Endothelial cell of umbilical vein (primary cell): ENCODE measurements at regions of chr4 and their contacts with region 1.

Region 1: GRCh38 chr4:121192480-121192879 is 28.4 kb upstream of the TNIP3 start:
- DNase-seq: peak; percentile 31
- H3K4me3 ChIP-seq: no peak overlapping the region
- H3K27ac ChIP-seq: no peak overlapping the region
- H3K4me1 ChIP-seq: no peaks in the 10 kb centered on the region
- H3K27me3 ChIP-seq: peaks cover 7 to 23% of the 10 kb centered on the region in 2 experiments
- CTCF ChIP-seq: peak; percentile 50 to 56
- POLR2A ChIP-seq: no peak

Region 2: DNA sequence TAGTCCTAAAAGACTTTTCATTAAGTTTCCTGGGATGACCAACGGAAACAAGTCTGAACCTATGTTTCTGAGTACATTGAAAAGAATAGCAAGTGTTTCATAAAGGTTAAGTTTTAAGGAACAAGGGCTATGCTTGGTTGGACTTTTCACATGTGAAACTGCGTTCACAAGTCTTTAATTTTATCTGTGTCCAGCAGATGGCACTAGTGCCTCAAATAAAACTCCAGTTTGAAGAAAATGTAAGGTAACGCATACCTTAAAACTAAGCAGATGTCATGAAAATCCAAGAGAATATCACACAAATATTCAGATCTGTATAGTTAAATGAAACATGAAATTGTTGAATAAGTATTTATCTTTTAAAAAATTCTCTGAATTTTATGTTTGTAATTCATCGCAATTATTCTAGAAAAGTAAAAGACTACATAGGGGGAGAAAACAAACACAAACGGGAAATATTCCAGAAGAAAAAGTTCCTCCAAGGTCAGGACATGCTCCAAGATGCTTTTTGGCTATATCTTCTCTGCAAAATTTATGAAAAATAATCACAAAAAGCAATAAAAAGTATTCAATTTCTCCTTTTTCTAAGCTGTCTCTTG is 1036.3 kb before region 1 on chr4:
- CTCF ChIA-PET with region 1: interaction called, 11 read pairs
- POLR2A ChIA-PET with region 1: no interaction called
- dilution Hi-C with region 1: no loop called
- intact Hi-C with region 1: no loop called
- DNase-seq: peak; percentile 79
- H3K4me3 ChIP-seq: no peak overlapping the region
- H3K27ac ChIP-seq: no peak overlapping the region
- H3K4me1 ChIP-seq: no peaks in the 10 kb centered on the region
- H3K27me3 ChIP-seq: no peaks in the 10 kb centered on the region
- CTCF ChIP-seq: peak; percentile 34
- POLR2A ChIP-seq: no peak

Region 3: GRCh38 chr4:120915336-120915735 is 277.1 kb before region 1 on chr4:
- CTCF ChIA-PET with region 1: no interaction called
- POLR2A ChIA-PET with region 1: no interaction called
- dilution Hi-C with region 1: no loop called
- intact Hi-C with region 1: no loop called
- DNase-seq: no peak
- H3K4me3 ChIP-seq: no peak overlapping the region
- H3K27ac ChIP-seq: no peak overlapping the region
- H3K4me1 ChIP-seq: no peaks in the 10 kb centered on the region
- H3K27me3 ChIP-seq: no peaks in the 10 kb centered on the region
- CTCF ChIP-seq: no peak
- POLR2A ChIP-seq: no peak

Region 4: DNA sequence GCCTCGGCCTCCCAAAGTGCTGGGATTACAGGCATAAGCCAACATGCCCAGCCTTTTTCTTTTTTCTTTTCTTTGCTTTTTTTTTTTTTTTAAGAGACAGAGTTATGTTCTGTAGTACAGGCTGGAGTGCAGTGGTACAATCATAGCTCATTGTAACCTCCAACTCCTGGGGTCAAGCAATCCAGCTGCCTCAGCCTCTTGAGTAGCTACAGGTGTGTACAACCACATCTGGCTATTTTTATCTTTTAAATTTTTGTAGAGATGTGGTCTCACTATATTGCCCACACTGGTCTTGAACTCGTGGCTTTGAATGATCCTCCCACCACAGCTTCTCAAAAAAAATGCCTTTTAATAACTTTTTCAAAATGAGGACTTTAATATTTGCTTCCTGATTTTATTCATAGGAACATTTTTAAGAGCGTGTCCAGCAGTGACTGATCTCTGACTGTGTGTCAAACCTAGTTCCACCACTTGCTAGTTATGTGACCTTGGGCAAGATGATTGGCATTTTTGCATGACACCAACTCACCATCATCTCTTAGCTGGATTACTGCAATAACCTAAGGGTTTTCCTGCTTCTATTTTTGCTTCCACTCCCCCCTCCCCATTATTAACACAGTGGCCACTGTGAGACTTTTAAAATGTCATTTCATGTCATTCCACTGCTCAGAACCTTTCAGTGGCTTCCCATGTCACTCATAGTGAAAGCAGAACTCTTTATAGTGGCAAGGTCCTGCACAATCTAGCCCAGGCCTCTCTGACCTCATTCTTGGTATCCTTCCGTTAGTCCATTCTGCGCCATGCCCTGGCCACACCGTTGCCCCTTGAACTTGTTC is 23.8 kb before region 1 on chr4:
- CTCF ChIA-PET with region 1: interaction called, 30 read pairs
- POLR2A ChIA-PET with region 1: no interaction called
- dilution Hi-C with region 1: no loop called
- intact Hi-C with region 1: no loop called
- DNase-seq: no peak
- H3K4me3 ChIP-seq: no peak overlapping the region
- H3K27ac ChIP-seq: no peak overlapping the region
- H3K4me1 ChIP-seq: no peaks in the 10 kb centered on the region
- H3K27me3 ChIP-seq: no peaks in the 10 kb centered on the region
- CTCF ChIP-seq: no peak
- POLR2A ChIP-seq: no peak

Region 5: DNA sequence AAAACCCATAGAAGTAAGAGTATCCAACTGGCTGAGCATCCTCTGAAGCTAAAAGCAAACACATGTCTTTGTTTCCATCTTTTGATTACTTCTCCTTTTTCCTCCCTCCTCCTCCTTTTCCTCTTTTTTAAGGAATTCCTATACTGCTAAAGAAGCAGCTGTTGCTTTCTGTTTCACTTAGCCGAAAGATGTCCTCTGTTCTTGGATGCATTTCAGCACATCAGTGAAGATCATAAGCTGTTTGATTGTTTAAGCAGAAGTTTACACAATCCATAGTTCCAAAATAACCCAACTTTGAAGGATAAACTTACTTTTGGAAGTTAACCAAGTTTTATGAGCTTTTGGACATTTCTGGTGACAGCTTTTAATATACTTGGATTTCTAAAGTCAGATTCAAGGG is 26.7 kb after region 1 on chr4:
- CTCF ChIA-PET with region 1: interaction called, 21 read pairs
- POLR2A ChIA-PET with region 1: no interaction called
- dilution Hi-C with region 1: no loop called
- intact Hi-C with region 1: no loop called
- DNase-seq: no peak
- H3K4me3 ChIP-seq: no peak overlapping the region
- H3K27ac ChIP-seq: no peak overlapping the region
- H3K4me1 ChIP-seq: no peaks in the 10 kb centered on the region
- H3K27me3 ChIP-seq: peaks cover 1 to 9% of the 10 kb centered on the region in 2 experiments
- CTCF ChIP-seq: no peak
- POLR2A ChIP-seq: no peak

Region 6: GRCh38 chr4:121246698-121247097 is 54.2 kb after region 1 on chr4:
- CTCF ChIA-PET with region 1: interaction called, 31 read pairs
- POLR2A ChIA-PET with region 1: no interaction called
- dilution Hi-C with region 1: no loop called
- intact Hi-C with region 1: no loop called
- DNase-seq: no peak
- H3K4me3 ChIP-seq: no peak overlapping the region
- H3K27ac ChIP-seq: no peak overlapping the region
- H3K4me1 ChIP-seq: no peaks in the 10 kb centered on the region
- H3K27me3 ChIP-seq: no peaks in the 10 kb centered on the region
- CTCF ChIP-seq: no peak
- POLR2A ChIP-seq: no peak

Region 7: GRCh38 chr4:121272526-121272925 is 80.0 kb after region 1 on chr4:
- CTCF ChIA-PET with region 1: interaction called, 10 read pairs
- POLR2A ChIA-PET with region 1: no interaction called
- dilution Hi-C with region 1: no loop called
- intact Hi-C with region 1: no loop called
- DNase-seq: no peak
- H3K4me3 ChIP-seq: no peak overlapping the region
- H3K27ac ChIP-seq: no peak overlapping the region
- H3K4me1 ChIP-seq: no peaks in the 10 kb centered on the region
- H3K27me3 ChIP-seq: no peaks in the 10 kb centered on the region
- CTCF ChIP-seq: no peak
- POLR2A ChIP-seq: no peak

Region 8: DNA sequence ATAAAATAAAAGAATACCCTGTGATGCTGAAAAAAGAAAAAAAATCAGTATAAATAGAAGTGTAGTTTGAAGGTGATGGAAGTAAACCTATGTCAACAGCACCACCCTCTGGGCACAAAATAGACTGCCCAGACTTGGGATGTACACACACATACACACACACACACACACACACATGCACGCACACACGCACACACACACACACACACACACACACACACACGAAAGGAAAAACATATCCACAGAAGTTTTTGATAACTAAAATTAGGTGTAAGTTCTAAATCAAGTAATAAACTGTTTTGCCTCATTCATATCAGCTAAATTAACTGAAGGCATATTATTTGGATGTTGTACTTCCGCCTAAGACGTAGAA is 463.8 kb after region 1 on chr4:
- CTCF ChIA-PET with region 1: interaction called, 8 read pairs
- POLR2A ChIA-PET with region 1: no interaction called
- dilution Hi-C with region 1: no loop called
- intact Hi-C with region 1: loop called (anchors 2 kb)
- DNase-seq: peak; percentile 66
- H3K4me3 ChIP-seq: no peak overlapping the region
- H3K27ac ChIP-seq: no peak overlapping the region
- H3K4me1 ChIP-seq: no peaks in the 10 kb centered on the region
- H3K27me3 ChIP-seq: no peaks in the 10 kb centered on the region
- CTCF ChIP-seq: peak; percentile 30 to 56
- POLR2A ChIP-seq: no peak